ENCODE measurements at regions of chr1 and their contacts with region 1.

Region 1: DNA sequence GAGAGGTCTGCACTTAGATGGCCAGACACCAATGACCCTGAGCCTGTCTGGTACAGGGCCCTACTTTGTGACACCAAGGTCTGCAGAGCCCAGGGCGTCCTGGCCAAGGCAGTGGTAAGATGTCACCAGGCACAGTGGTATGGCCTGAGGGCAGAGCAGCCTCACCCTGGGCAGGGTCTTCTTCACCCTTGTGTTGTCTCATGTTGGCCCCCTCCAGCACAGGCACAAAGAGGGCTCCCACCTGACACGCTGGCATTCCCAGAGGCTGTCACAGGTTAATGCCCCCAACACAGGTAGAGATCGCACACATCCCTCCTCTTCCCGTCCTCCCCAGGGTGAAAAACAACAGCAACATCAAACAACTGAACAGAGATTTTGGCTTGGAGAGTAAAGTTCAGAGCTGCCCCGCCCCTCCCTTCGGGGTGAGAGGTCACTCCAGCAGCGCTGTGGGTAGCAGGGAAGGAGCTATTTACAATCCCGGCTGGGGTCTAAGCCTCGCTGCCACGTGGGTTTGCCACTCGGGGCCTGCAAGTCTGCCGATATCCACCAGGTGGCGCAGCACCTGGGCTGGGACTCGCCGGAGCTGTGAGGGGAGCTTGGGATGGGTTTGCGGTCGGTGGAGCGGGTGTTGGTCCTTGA is 12.6 kb downstream of the EFNA3 start:
- DNase-seq: peak; percentile 76 to 89
- ATAC-seq: peak; percentile 75 to 97 (median 90)
- H3K4me3 ChIP-seq: no peak overlapping the region
- H3K4me3 Mint-ChIP-seq: no peak overlapping the region
- H3K27ac ChIP-seq: no peak overlapping the region
- H3K27ac Mint-ChIP-seq: no peak overlapping the region
- H3K4me1 ChIP-seq: peaks cover 12% of the 10 kb centered on the region
- H3K4me1 Mint-ChIP-seq: peaks cover 0 to 4% of the 10 kb centered on the region in 2 donors
- H3K27me3 ChIP-seq: no peaks in the 10 kb centered on the region
- H3K27me3 Mint-ChIP-seq: peaks cover 5 to 17% of the 10 kb centered on the region in 2 donors
- CTCF ChIP-seq: peak; percentile 97

Region 2: DNA sequence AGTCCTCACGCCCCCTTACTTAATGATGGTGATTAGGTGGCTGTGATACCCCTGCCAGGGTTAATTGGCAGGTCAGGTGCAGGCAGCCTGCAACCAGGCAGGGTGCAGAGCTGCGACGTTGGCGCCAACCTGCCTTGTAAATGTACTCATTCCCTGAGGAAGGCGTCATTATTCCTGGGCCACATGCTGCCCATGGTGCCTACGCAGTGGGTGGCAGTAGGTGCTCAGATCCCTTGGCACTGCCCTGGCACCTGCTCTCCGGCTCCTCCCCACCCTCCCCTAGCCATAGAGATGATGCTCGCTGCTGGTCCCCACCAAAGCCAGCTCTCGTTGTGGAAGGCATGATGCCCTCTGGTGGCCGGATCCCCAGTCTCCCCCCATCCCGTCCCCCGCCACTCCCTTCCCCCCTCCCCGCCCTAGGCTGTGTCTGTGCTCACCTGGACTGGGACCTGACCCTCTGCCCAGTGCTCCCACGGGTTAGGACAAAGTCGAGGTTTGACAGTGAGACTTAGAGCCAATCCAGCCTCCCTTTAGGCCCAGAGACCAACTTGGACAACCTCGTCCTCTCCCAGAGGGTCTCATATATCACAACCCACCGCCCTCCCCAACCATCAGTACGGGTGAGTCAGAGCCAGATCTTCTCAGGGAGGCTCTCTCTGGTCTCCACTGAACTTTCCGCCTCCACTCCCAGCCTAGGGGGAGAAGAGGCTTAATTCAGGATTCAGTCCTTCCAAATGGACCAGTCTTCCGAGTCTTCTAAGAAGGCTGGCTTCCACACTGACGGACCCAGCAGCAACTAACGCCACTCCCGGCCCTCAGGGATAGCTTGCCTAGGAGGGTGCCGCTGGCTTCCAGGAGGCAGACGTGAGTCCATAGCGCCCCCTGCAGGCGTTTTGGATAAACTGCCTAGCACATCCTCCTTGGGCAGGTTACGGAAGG is 76.2 kb after region 1 on chr1:
- intact Hi-C with region 1: loop called (anchors 1 kb)
- DNase-seq: peak; percentile 82 to 93
- ATAC-seq: peak; percentile 81 to 87 (median 85)
- H3K4me3 ChIP-seq: peak overlapping the region; percentile 13
- H3K4me3 Mint-ChIP-seq: peak overlapping the region; percentile 4
- H3K27ac ChIP-seq: no peak overlapping the region
- H3K27ac Mint-ChIP-seq: peak overlapping the region in 1 of 2 donors; percentile 68
- H3K4me1 ChIP-seq: peaks cover 20% of the 10 kb centered on the region
- H3K4me1 Mint-ChIP-seq: peaks cover 7 to 21% of the 10 kb centered on the region in 2 donors
- H3K27me3 ChIP-seq: peaks cover 2% of the 10 kb centered on the region
- H3K27me3 Mint-ChIP-seq: peaks cover 0 to 7% of the 10 kb centered on the region in 2 donors
- CTCF ChIP-seq: peak; percentile 84

Measured in natural killer cell (primary cell).